ENCODE measurements at regions of chr20 and their contacts with region 1.

Region 1: DNA sequence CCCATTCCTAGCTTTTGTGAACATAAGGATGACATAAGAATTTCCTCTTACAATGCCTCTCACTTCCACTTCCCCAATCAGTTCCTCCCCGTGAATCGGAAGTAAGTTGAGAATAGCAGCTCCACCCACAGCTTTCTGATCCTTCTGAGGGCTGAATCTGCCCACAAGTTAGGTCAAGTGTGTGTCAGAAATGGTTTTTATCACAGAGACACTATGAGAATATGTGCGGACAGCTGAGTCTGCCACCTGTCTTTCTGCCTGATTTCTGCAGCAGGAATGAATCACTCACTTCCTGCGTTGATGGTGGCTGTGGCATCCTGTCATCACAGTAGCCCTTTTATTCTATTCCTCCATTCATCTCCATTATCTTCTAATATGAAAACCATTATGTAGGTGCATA is 70.2 kb downstream of the RIN2 start:
- DNase-seq: peak; percentile 64 to 71
- ATAC-seq: peak; percentile 80 to 88
- H3K4me3 ChIP-seq: no peak overlapping the region
- H3K27ac ChIP-seq: peak overlapping the region; percentile 31 to 75; a peak in 4 of 6 replicates
- H3K4me1 ChIP-seq: peaks cover 21% of the 10 kb centered on the region
- CTCF ChIP-seq: peak; percentile 56
- EP300 ChIP-seq: no peak
- POLR2A ChIP-seq: no peak
- RAD21 ChIP-seq: peak; percentile 45 to 53; a peak in 2 of 5 replicates

Region 2: GRCh38 chr20:19775360-19776253 is 52.6 kb before region 1 on chr20:
- CTCF ChIA-PET with region 1: interaction called, 10 read pairs
- POLR2A ChIA-PET with region 1: no interaction called
- DNase-seq: no peak
- ATAC-seq: peak in 1 of 2 experiments; percentile 45; a peak in 2 of 6 replicates
- H3K4me3 ChIP-seq: no peak overlapping the region
- H3K27ac ChIP-seq: no peak overlapping the region
- H3K4me1 ChIP-seq: peaks cover 32% of the 10 kb centered on the region
- CTCF ChIP-seq: no peak
- EP300 ChIP-seq: no peak
- POLR2A ChIP-seq: no peak
- RAD21 ChIP-seq: no peak

Region 3: DNA sequence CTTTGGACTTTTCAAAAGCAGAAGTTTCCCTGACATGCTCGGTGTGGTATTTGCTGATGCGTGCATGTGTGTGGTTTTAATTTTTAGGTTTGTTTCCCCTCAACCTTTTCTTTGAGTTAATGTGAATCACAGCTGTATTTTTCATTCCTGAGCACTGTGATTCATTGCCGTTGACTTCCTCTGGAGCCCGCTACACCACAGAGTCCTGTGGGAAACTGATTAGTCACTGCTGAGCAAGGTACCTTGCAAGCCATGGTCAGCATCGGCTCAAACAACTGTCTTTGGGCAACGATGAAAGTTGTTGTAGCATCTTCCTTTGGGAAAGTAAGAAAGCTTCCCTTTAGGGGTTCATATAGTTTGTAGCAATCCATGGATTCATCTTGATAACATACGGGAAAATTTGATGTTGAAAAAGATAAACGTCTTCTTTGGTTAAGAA is 12.7 kb before region 1 on chr20:
- CTCF ChIA-PET with region 1: interaction called, 55 read pairs
- POLR2A ChIA-PET with region 1: interaction called, 3 read pairs
- DNase-seq: peak; percentile 95 to 96
- ATAC-seq: peak; percentile 99 to 100
- H3K4me3 ChIP-seq: no peak overlapping the region
- H3K27ac ChIP-seq: peak overlapping the region; percentile 80 to 89
- H3K4me1 ChIP-seq: peaks cover 40% of the 10 kb centered on the region
- CTCF ChIP-seq: peak; percentile 14; the same call in 2 of the 3 replicates
- EP300 ChIP-seq: peak; percentile 75 to 89; a peak in 3 of 5 replicates
- POLR2A ChIP-seq: no peak
- RAD21 ChIP-seq: peak; percentile 57 to 75

Region 4: DNA sequence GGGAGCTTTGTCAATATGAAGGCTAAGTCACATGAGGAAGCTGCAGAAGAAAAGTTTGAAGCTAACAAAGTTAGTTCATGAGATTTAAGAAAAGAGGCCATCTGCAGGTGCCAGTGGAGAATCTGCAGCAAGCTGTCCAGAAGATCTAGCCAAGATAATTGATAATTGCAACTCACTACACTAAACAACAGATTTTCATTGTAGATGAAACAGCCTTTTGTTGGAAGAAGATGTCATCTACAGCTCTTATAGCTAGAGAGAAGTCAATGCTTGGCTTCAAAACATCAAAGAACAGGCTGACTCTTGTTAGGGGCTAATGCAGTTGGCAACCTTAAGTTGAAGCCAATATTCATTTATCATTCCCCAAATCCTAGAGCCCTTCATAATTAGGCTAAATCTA is 13.5 kb after region 1 on chr20:
- CTCF ChIA-PET with region 1: interaction called, 17 read pairs
- POLR2A ChIA-PET with region 1: no interaction called
- DNase-seq: no peak
- ATAC-seq: no peak
- H3K4me3 ChIP-seq: no peak overlapping the region
- H3K27ac ChIP-seq: no peak overlapping the region
- H3K4me1 ChIP-seq: no peaks in the 10 kb centered on the region
- CTCF ChIP-seq: no peak
- EP300 ChIP-seq: no peak
- POLR2A ChIP-seq: no peak
- RAD21 ChIP-seq: no peak

Region 5: GRCh38 chr20:19864127-19864526 is 35.9 kb after region 1 on chr20:
- CTCF ChIA-PET with region 1: interaction called, 14 read pairs
- POLR2A ChIA-PET with region 1: no interaction called
- DNase-seq: peak in 1 of 2 experiments; percentile 82
- ATAC-seq: peak in 1 of 2 experiments; percentile 75; a peak in 3 of 6 replicates
- H3K4me3 ChIP-seq: no peak overlapping the region
- H3K27ac ChIP-seq: peak overlapping the region; percentile 51 to 62; a peak in 5 of 6 replicates
- H3K4me1 ChIP-seq: peaks cover 54% of the 10 kb centered on the region
- CTCF ChIP-seq: no peak
- EP300 ChIP-seq: 0 out of 5 replicates have a peak, but pooled peaks of 1 of the 2 experiments have one; percentile 33
- POLR2A ChIP-seq: no peak
- RAD21 ChIP-seq: peak in 1 of 2 experiments; percentile 17; a peak in 1 of 5 replicates

Region 6: GRCh38 chr20:20083807-20084206 is 255.6 kb after region 1 on chr20:
- CTCF ChIA-PET with region 1: no interaction called
- POLR2A ChIA-PET with region 1: no interaction called
- DNase-seq: peak; percentile 29 to 39
- ATAC-seq: peak; percentile 71 to 89; a peak in 4 of 6 replicates
- H3K4me3 ChIP-seq: no peak overlapping the region
- H3K27ac ChIP-seq: no peak overlapping the region
- H3K4me1 ChIP-seq: no peaks in the 10 kb centered on the region
- CTCF ChIP-seq: peak; percentile 83
- EP300 ChIP-seq: no peak
- POLR2A ChIP-seq: no peak
- RAD21 ChIP-seq: peak; percentile 82 to 85